ENCODE measurements at regions of chr1 and their contacts with region 1.

Region 1: DNA sequence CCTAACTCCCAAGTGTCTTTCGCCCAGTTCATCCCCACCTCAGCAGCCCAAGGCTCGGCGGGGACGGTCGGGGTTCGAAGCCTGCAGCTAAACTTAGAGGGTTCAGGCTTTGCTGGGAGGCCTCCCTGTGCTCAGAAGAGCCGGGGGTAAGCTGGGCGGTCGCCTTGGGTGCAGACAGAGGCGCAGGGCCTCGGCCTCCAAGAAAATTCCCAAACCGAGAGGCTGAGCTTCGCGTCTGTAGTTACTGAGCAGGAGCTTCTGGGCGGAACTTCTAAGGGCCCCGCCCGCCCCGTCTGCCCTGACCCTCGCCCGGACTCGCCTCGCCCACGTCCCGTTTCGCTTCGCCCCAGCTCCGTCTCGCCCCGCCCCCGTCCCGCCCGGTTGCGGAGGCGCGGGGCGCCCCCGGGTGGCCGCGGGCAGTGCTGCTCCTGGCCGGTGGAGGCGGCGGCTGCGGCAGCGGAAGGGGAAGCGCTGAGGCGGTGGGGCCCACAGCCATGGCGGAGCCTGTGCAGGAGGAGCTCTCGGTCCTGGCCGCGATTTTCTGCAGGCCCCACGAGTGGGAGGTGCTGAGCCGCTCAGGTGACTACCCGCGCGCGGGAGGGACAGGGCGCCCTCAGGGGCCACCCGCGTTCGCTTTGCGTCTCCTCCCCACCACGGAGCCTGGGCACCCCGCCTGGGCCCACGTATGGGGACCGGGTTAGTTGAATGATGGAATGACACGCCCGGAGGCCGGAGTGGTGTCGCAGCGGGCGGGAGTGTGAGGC is at the start of gene RWDD3:
- DNase-seq: peak; percentile 91
- H3K4me3 ChIP-seq: peak within 1 kb of the TSS; percentile 71 to 99 (median 78)
- H3K27ac ChIP-seq: peak within 1 kb of the TSS; percentile 62
- H3K4me1 ChIP-seq: peaks cover 8% of the 10 kb centered on the region
- H3K27me3 ChIP-seq: peaks cover 5 to 9% of the 10 kb centered on the region in 2 experiments
- CTCF ChIP-seq: peak; percentile 69 to 80
- POLR2A ChIP-seq: peak; percentile 87
- total RNA-seq, gene RWDD3: 12.1 and 14.4 TPM in 2 replicates

Region 2: GRCh38 chr1:95072532-95073419 is 161.1 kb before region 1 on chr1 and contains the start of gene ALG14:
- CTCF ChIA-PET with region 1: interaction called, 23 read pairs
- POLR2A ChIA-PET with region 1: interaction called, 4 read pairs
- dilution Hi-C with region 1: no loop called
- intact Hi-C with region 1: loop called (anchors 2 kb)
- DNase-seq: peak; percentile 97
- H3K4me3 ChIP-seq: peak within 1 kb of the TSS; percentile 25 to 75 (median 65)
- H3K27ac ChIP-seq: peak within 1 kb of the TSS; percentile 50
- H3K4me1 ChIP-seq: peaks cover 7% of the 10 kb centered on the region
- H3K27me3 ChIP-seq: peaks cover 1 to 5% of the 10 kb centered on the region in 2 experiments
- CTCF ChIP-seq: no peak
- POLR2A ChIP-seq: peak; percentile 69
- total RNA-seq, gene ALG14: 8.6 and 12.3 TPM in 2 replicates

Region 3: DNA sequence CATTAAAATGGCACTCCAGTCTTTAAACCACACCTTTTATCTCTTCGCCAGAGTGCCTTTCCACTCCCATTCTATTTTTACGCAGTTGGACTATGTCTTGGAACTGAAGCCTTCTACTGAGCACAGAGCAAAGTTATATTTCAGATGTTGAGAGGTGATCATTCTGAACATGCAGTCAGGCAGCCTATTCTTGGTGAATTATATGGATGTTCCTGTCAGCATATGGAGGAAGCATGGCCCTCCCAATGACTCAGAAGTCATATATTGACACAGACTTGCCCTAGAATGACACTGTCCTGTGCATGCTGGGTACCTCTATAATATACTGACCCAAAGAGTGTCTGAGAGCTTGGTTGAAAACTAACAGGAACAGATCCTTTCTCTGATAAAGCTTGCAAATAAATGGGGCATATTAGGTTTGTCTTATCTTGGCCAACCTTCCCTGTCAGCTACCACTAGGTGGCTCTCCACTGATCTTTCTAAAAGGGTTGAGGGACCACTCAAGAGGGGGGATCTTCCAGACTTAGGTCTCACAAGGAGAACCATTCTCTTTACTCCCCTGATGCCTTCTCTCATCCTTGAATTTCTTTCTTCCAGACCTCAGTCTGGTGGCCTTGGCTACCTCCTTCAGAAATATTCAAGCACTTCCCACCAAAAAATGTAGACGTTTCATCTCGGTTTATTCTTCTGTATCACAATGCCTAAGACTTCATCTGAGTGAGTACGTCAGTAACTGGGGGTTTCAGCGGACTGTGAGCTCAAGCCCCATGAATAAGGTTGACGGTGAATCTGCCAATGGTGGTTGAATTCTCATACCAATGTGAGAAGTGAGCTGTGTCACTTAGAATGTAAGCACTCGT is 149.4 kb before region 1 on chr1:
- CTCF ChIA-PET with region 1: interaction called, 51 read pairs
- POLR2A ChIA-PET with region 1: no interaction called
- dilution Hi-C with region 1: no loop called
- intact Hi-C with region 1: loop called (anchors 1 kb)
- DNase-seq: peak; percentile 39
- H3K4me3 ChIP-seq: no peak overlapping the region
- H3K27ac ChIP-seq: no peak overlapping the region
- H3K4me1 ChIP-seq: peaks cover 16% of the 10 kb centered on the region
- H3K27me3 ChIP-seq: peaks cover 9 to 17% of the 10 kb centered on the region in 2 experiments
- CTCF ChIP-seq: peak; percentile 59 to 60
- POLR2A ChIP-seq: no peak

Region 4: GRCh38 chr1:95116580-95117206 is 117.2 kb before region 1 on chr1:
- CTCF ChIA-PET with region 1: interaction called, 17 read pairs
- POLR2A ChIA-PET with region 1: no interaction called
- dilution Hi-C with region 1: no loop called
- intact Hi-C with region 1: loop called (anchors 10 kb)
- DNase-seq: peak; percentile 50
- H3K4me3 ChIP-seq: peak overlapping the region; percentile 4 to 57 (median 38)
- H3K27ac ChIP-seq: no peak overlapping the region
- H3K4me1 ChIP-seq: no peaks in the 10 kb centered on the region
- H3K27me3 ChIP-seq: peaks cover 25 to 35% of the 10 kb centered on the region in 2 experiments
- CTCF ChIP-seq: peak; percentile 45 to 78
- POLR2A ChIP-seq: no peak

Region 5: DNA sequence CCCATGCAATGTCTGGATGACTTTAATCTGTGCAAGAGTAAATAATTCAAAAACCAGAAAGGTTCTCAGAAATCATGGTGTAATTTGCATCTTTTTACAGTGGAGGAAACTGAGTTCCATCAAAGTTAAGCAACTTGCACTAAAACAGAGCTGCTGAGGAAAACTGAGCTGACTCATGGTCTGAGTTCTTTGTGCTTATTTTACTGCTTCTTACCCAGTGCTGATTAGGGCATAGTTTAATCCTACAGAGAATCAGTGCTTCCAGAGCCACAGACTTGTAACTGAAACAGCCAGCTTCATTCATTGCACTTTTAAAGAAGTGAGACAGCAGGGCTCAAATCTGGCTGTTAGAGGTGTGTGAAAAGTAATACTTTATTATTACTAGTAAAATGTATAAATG is 10.8 kb before region 1 on chr1:
- CTCF ChIA-PET with region 1: interaction called, 19 read pairs
- POLR2A ChIA-PET with region 1: no interaction called
- dilution Hi-C with region 1: no loop called
- intact Hi-C with region 1: no loop called
- DNase-seq: no peak
- H3K4me3 ChIP-seq: no peak overlapping the region
- H3K27ac ChIP-seq: no peak overlapping the region
- H3K4me1 ChIP-seq: no peaks in the 10 kb centered on the region
- H3K27me3 ChIP-seq: peaks cover 2 to 7% of the 10 kb centered on the region in 2 experiments
- CTCF ChIP-seq: no peak
- POLR2A ChIP-seq: no peak

Region 6: DNA sequence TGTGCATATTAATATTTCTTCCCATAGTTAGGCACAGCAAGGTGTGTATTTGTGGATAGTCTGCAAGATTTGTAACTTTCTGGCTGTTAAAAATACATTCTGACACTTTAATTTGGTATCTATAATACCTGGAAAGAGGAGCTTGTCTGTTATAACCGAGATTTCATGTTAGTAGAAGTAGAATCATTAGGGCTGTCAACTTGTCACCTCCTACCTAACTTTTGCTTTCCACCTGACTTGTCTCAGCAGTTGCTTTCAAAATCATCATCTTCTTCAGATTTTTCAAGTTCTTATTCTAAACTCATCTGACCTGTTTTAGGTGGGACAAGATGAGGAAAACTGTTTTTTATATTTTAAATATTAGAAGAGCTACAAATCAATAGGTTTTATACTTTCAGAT is 11.1 kb after region 1 on chr1:
- CTCF ChIA-PET with region 1: interaction called, 23 read pairs
- POLR2A ChIA-PET with region 1: no interaction called
- dilution Hi-C with region 1: no loop called
- intact Hi-C with region 1: no loop called
- DNase-seq: no peak
- H3K4me3 ChIP-seq: no peak overlapping the region
- H3K27ac ChIP-seq: no peak overlapping the region
- H3K4me1 ChIP-seq: no peaks in the 10 kb centered on the region
- H3K27me3 ChIP-seq: no peaks in the 10 kb centered on the region
- CTCF ChIP-seq: no peak
- POLR2A ChIP-seq: no peak

Region 7: DNA sequence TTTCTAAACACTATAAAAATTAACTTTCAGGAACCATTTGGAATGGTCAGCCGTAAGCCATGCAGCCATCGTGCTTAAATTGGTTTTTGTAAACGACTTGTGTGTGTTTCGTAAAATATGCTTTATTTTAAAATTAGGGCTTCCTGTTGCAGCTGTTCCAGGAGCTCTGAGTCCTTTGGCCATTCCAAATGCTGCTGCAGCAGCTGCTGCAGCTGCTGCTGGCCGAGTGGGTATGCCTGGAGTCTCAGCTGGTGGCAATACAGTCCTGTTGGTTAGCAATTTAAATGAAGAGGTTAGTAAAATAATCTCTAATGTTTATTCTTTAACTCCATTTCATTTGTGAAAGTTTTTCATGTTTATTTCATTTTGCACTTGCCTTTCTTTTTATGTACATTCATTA is 1570.7 kb after region 1 on chr1:
- CTCF ChIA-PET with region 1: no interaction called
- POLR2A ChIA-PET with region 1: no interaction called
- dilution Hi-C with region 1: no loop called
- intact Hi-C with region 1: no loop called
- DNase-seq: no peak
- H3K4me3 ChIP-seq: no peak overlapping the region
- H3K27ac ChIP-seq: no peak overlapping the region
- H3K4me1 ChIP-seq: peaks cover 16% of the 10 kb centered on the region
- H3K27me3 ChIP-seq: no peaks in the 10 kb centered on the region
- CTCF ChIP-seq: no peak
- POLR2A ChIP-seq: no peak

Measured in endothelial cell of umbilical vein (primary cell).